B cell (primary cell): ENCODE measurements at regions of chr21 and their contacts with region 1.

Region 1: GRCh38 chr21:40631211-40631610 is 215.7 kb downstream of the DSCAM start:
- DNase-seq: no peak
- ATAC-seq: no peak
- H3K4me3 ChIP-seq: no peak overlapping the region
- H3K4me3 Mint-ChIP-seq: no peak overlapping the region
- H3K27ac ChIP-seq: no peak overlapping the region
- H3K27ac Mint-ChIP-seq: no peak overlapping the region
- H3K4me1 ChIP-seq: no peaks in the 10 kb centered on the region
- H3K4me1 Mint-ChIP-seq: no peaks in the 10 kb centered on the region
- H3K27me3 ChIP-seq: no peaks in the 10 kb centered on the region
- H3K27me3 Mint-ChIP-seq: no peaks in the 10 kb centered on the region
- CTCF ChIP-seq: no peak

Region 2: GRCh38 chr21:40587736-40588346 is 43.4 kb before region 1 on chr21:
- CTCF ChIA-PET with region 1: no interaction called
- POLR2A ChIA-PET with region 1: no interaction called
- intact Hi-C with region 1: loop called (anchors 2 kb)
- DNase-seq: no peak
- ATAC-seq: no peak
- H3K4me3 ChIP-seq: no peak overlapping the region
- H3K4me3 Mint-ChIP-seq: no peak overlapping the region
- H3K27ac ChIP-seq: no peak overlapping the region
- H3K27ac Mint-ChIP-seq: no peak overlapping the region
- H3K4me1 ChIP-seq: no peaks in the 10 kb centered on the region
- H3K4me1 Mint-ChIP-seq: no peaks in the 10 kb centered on the region
- H3K27me3 ChIP-seq: no peaks in the 10 kb centered on the region
- H3K27me3 Mint-ChIP-seq: no peaks in the 10 kb centered on the region
- CTCF ChIP-seq: no peak